ENCODE measurements at regions of chr3 and their contacts with region 1.

Region 1: GRCh38 chr3:23740517-23740965 is 65.2 kb upstream of the UBE2E1 start:
- DNase-seq: peak; percentile 10
- H3K4me3 Mint-ChIP-seq: peak overlapping the region; percentile 25
- H3K27ac Mint-ChIP-seq: peak overlapping the region; percentile 59
- H3K4me1 Mint-ChIP-seq: peaks cover 21% of the 10 kb centered on the region
- H3K27me3 Mint-ChIP-seq: peaks cover 28% of the 10 kb centered on the region

Region 2: DNA sequence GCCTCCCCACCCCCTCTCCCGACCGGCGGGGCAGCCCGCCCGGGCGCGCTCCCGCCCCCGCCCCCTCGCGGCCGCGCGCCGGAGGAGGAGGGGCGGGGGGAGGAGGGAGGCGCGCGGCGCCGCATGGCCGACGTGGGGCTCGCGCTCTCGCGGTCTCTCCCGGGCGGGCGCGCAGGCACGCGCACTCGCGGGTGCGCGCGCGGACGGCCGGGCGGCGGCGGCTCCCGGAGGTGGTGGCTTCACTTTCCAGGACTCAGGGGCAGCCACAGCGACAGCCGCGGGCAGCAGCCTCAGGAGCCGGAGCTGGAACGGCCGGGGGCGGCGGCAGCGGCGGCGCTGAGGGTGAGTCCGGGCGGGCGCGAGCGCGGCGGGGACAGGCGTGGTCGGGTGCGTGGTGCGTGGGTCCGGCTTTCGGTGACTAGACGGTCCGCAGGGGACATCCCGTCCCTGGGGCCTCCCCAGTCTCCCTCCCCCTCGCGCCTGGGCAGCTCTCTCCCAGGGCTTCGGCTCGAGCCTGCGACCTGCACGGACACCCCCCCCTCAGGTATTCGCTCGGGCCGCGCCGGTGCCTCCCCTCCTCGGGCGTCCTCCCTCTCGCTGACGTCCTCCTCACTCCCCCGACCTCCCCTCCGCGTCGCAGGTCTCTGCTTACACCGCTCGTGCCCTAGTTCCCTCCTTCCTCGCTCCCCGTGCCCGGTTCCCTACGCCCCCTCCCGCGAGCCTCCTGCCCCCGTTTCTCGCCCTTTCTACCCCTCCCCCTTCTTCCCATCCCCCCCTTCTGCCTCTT is 537.4 kb before region 1 on chr3 and contains the start of gene UBE2E2:
- intact Hi-C with region 1: loop called (anchors 5 kb)
- DNase-seq: peak; percentile 47
- H3K4me3 Mint-ChIP-seq: peak within 1 kb of the TSS; percentile 91
- H3K27ac Mint-ChIP-seq: peak within 1 kb of the TSS; percentile 78
- H3K4me1 Mint-ChIP-seq: peaks cover 33% of the 10 kb centered on the region
- H3K27me3 Mint-ChIP-seq: peaks cover 40% of the 10 kb centered on the region
- total RNA-seq, gene UBE2E2: 11.8 and 13.9 TPM in 2 replicates

Region 3: DNA sequence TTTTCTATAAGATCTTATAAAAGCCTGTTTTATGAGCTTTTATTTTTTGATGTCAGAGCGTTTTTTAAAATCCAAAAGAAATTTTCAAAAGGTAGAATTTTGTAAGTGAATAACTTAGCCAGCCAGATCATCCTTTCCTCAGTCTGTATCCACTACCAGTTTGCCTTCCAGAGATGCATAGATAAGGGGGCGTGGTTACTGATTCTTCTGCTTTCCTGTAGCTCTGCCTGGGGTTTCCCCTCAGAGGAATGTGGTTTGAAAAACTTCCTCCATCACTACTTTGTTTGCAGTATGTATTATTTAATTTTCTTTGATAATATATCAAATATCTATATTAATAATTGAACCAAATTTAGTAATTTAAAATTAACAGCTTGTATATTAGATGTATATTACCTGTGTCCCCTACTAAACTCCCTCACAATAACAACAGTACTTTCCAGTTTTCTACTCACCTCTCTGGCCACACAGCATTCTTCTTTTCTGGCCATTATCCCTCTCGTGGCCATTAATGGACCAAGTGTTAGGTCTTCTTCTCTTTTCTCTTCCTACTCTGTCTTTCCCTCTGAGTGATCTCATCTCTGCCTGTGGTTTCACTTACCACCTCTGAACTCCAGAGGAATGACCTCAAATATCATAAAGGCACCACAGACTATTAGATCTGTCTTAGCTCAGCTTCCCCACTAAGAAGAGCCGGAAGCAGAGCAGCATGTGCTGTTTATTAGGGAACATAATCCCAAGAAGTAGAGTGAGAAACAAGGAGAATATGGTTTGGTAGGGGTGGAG is 297.8 kb before region 1 on chr3:
- intact Hi-C with region 1: loop called (anchors 10 kb)
- DNase-seq: no peak
- H3K4me3 Mint-ChIP-seq: no peak overlapping the region
- H3K27ac Mint-ChIP-seq: no peak overlapping the region
- H3K4me1 Mint-ChIP-seq: peaks cover 32% of the 10 kb centered on the region
- H3K27me3 Mint-ChIP-seq: peaks cover 13% of the 10 kb centered on the region

Region 4: DNA sequence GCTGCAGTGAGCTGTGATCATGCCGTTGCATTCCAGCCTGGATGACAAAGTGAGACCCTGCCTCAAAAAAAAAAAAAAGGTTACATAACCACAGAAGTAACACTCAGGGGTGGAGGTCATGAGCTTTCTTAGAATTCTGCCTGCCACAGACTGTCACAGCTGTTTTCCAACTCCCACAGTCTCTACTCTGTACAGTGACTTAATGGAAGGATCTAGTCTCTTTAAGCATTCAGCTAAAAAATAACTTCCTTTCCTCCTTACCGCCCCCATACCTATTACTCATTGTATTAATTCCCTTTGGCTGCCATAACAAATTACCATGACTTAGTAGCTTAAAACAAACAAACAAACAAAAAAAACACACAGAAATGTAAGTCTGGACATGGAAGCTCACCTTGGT is 34.4 kb before region 1 on chr3:
- intact Hi-C with region 1: loop called (anchors 1 kb)
- DNase-seq: no peak
- H3K4me3 Mint-ChIP-seq: no peak overlapping the region
- H3K27ac Mint-ChIP-seq: no peak overlapping the region
- H3K4me1 Mint-ChIP-seq: peaks cover 9% of the 10 kb centered on the region
- H3K27me3 Mint-ChIP-seq: peaks cover 8% of the 10 kb centered on the region

Region 5: DNA sequence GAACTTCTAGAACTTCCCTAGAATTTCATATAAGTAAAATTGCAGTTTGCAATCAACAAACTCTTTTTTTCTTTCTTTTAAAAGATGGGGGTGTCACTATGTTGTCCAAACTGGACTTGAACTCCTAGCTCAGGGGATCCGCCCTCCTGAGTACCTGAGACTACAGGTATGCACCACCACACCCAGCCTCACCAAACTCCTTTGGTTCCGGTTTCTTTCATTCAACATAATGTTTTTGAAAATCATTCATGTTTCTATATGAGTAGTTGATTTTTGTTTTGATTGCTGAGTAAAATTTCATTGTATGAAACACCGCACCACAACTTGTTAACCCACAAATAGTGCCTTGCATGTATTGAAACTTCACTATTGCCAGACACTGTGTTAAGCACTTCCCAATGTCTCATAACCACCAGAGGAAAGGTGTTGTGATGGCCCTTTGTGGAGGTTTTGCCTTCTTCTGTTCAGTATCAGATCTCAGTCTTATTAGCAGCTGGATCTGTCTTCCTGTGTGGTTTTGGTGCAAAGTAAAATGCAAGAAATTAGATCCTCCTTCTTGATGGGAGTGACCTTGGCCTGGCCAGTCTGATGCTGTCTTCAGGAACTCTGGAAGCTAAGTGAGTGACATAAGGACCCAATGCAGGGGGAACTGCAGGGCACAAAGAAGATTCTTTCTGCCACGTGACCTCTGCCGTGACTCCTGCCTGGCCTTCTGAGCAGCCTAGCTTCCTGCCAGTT is 13.6 kb before region 1 on chr3:
- intact Hi-C with region 1: loop called (anchors 1 kb)
- DNase-seq: no peak
- H3K4me3 Mint-ChIP-seq: no peak overlapping the region
- H3K27ac Mint-ChIP-seq: no peak overlapping the region
- H3K4me1 Mint-ChIP-seq: peaks cover 8% of the 10 kb centered on the region
- H3K27me3 Mint-ChIP-seq: peaks cover 1% of the 10 kb centered on the region

Region 6: GRCh38 chr3:23805633-23806533 is 65.3 kb after region 1 on chr3 and contains the start of gene UBE2E1:
- intact Hi-C with region 1: loop called (anchors 2 kb)
- DNase-seq: peak; percentile 53
- H3K4me3 Mint-ChIP-seq: peak within 1 kb of the TSS; percentile 95
- H3K27ac Mint-ChIP-seq: peak within 1 kb of the TSS; percentile 96
- H3K4me1 Mint-ChIP-seq: peaks cover 49% of the 10 kb centered on the region
- H3K27me3 Mint-ChIP-seq: peaks cover 33% of the 10 kb centered on the region
- total RNA-seq, gene UBE2E1: 78.8 and 87.0 TPM in 2 replicates

Region 7: GRCh38 chr3:23945903-23946751 is 205.6 kb after region 1 on chr3:
- intact Hi-C with region 1: loop called (anchors 2 kb)
- DNase-seq: peak; percentile 90
- H3K4me3 Mint-ChIP-seq: peak overlapping the region; percentile 85
- H3K27ac Mint-ChIP-seq: peak overlapping the region; percentile 86
- H3K4me1 Mint-ChIP-seq: peaks cover 26% of the 10 kb centered on the region
- H3K27me3 Mint-ChIP-seq: peaks cover 24% of the 10 kb centered on the region

Region 8: DNA sequence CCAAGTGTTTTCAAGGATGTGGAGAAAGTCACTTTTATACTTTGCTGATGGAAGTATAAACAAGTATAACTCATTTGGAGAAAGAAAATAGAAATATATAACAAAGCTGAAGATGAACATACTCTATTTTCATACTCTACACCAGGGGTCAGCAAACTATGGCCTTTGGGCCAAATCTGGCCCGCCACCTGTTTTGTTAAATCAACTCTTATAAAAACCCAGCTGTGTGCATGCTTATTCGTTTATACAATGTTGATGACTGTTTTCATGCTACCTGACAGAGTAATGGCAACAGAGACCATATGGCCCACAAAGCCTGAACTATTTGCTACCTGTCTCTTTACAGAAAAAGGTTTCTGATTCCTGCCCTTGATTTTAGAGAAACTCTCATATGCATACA is 328.5 kb after region 1 on chr3:
- intact Hi-C with region 1: no loop called
- DNase-seq: no peak
- H3K4me3 Mint-ChIP-seq: no peak overlapping the region
- H3K27ac Mint-ChIP-seq: no peak overlapping the region
- H3K4me1 Mint-ChIP-seq: no peaks in the 10 kb centered on the region
- H3K27me3 Mint-ChIP-seq: peaks cover 2% of the 10 kb centered on the region

Region 9: GRCh38 chr3:24101676-24102168 is 361.2 kb after region 1 on chr3:
- intact Hi-C with region 1: no loop called
- DNase-seq: no peak
- H3K4me3 Mint-ChIP-seq: no peak overlapping the region
- H3K27ac Mint-ChIP-seq: no peak overlapping the region
- H3K4me1 Mint-ChIP-seq: no peaks in the 10 kb centered on the region
- H3K27me3 Mint-ChIP-seq: peaks cover 1% of the 10 kb centered on the region

Measured in activated T-helper 1 cell treated with anti-CD3 and anti-CD28 coated beads, Interleukin-12 subunit alpha, Interleukin-12 subunit beta, Interleukin-2, Interleukin-4 antibody, amounts not matched to agents 30 ng/mL and 10 ng/mL and 1 ng/mL, durations not matched to agents 14 hours and 24 hours and 36 hours (primary cell).